ENCODE measurements at regions of chr17 and their contacts with region 1.

Region 1: DNA sequence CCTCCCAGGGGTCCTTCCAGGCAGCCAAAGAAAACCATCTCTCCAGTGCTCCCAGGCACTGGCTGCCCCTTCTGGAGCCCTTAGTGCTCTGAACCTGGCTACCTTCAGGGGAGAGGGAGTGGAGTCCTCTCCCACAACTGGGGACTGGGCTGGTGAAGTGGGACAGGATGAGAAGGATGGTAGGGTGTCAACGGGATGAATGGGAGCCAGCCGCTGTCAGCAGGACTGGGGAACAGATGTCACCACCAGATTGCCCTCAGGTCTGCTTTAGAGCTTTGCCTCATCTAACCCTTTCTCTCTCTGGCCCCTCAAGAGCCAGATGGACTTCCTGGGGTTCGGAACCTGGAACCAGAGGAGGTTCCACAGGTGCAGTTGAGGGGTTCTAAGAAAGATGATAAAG is 488 bp upstream of the SEBOX start:
- DNase-seq: peak; percentile 28

Region 2: GRCh38 chr17:28379814-28380801 is 14.6 kb after region 1 on chr17:
- intact Hi-C with region 1: loop called in 1 of 2 experiments (anchors 2 kb)
- DNase-seq: peak; percentile 54

Region 3: GRCh38 chr17:28416703-28417311 is 51.3 kb after region 1 on chr17:
- intact Hi-C with region 1: no loop called
- DNase-seq: no peak